ENCODE measurements at regions of chr12 and their contacts with region 1.

Region 1: GRCh38 chr12:6965026-6965661 is 5.3 kb downstream of the PHB2 start:
- DNase-seq: peak; percentile 92
- H3K4me3 Mint-ChIP-seq: peak overlapping the region; percentile 87
- H3K27ac Mint-ChIP-seq: peak overlapping the region; percentile 94
- H3K4me1 Mint-ChIP-seq: peaks cover 63% of the 10 kb centered on the region
- H3K27me3 Mint-ChIP-seq: no peaks in the 10 kb centered on the region
- CTCF ChIP-seq: peak; percentile 82

Region 2: DNA sequence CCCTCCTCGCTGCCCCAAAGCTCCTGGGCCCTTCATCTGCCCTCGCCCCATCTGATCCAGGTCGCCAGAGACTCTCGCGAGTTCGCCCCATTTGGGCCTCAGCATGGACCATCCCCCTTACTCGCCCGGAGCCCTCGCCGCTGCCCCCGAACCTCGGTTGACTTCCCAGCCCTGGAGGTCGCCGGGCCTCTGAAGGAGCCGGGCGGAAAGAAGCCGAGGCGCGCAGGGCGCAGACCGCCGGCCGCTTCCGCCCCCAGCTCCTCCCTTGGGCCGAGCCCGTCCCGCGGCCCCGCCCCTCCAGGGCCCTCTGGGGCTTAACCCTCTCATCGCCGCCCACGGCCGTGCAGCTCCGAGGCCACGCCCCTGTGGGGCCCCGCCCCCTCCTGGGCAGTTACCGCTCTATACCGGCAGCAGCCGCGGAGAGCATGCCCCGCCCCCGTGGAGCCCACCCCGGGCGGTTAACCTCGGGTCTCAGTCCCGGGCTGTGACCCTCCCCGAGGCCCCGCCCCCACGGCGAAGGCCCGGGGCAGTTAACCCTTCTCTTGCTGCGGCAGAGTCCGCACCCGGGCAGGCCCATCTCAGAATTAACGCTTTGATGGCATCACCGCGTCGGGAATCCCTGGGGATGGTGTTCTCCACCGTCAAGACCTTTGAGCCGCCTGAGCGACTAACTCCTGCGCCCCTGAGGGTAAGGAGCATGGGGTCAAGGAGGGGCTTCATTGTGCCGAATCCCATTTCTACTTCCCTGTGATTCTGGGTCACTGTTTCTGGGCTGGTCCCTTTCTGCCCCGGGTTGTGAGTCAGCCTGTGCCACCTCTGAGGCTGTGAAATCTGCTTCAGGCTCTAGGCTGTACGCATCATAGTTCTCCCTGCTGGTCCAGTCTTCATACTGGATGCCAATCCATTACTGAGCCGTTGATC is 91.8 kb before region 1 on chr12 and contains the start of gene SPSB2:
- CTCF ChIA-PET with region 1: interaction called, 7 read pairs
- POLR2A ChIA-PET with region 1: interaction called, 12 read pairs
- intact Hi-C with region 1: no loop called
- DNase-seq: peak; percentile 93
- H3K4me3 Mint-ChIP-seq: peak within 1 kb of the TSS; percentile 91
- H3K27ac Mint-ChIP-seq: peak within 1 kb of the TSS; percentile 77
- H3K4me1 Mint-ChIP-seq: peaks cover 24% of the 10 kb centered on the region
- H3K27me3 Mint-ChIP-seq: no peaks in the 10 kb centered on the region
- CTCF ChIP-seq: no peak
- total RNA-seq, gene SPSB2: 9.2 and 10.8 TPM in 2 replicates

Region 3: DNA sequence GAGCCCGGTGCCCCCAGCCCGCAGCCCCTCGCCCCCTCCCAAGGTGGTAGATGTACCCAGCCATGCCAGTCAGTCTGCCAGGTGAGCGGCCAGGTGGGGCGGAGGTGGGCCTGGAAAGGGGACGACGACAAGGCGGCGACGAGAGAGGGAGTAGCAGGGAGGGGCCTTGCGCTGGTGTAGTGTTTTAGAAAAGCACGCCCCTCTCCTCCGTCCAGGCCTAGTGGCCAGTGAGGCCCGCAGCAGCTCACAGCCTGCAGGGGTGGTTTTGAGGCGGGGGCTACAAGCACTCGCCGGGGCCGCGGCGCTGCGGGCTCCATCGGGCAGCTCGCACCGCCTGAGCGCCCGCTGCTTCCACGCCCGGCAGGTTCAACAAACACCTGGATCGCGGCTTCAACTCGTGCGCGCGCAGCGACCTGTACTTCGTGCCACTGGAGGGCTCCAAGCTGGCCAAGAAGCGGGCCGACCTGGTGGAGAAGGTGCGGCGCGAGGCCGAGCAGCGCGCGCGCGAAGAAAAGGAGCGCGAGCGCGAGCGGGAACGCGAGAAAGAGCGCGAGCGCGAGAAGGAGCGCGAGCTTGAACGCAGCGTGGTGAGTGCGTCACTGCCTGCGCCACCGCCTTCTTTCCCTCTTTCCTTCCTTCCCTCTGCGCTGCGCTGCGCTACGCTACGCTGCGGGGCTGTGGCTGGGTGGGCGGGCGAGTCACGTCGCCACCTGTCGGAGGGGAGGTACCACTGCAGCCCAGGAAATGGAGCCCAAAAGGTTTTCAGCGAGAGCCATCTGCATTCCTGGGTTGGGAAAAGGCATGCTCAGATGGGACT is 27.5 kb before region 1 on chr12:
- CTCF ChIA-PET with region 1: interaction called, 18 read pairs
- POLR2A ChIA-PET with region 1: interaction called, 495 read pairs
- intact Hi-C with region 1: no loop called
- DNase-seq: peak; percentile 94
- H3K4me3 Mint-ChIP-seq: peak overlapping the region; percentile 71
- H3K27ac Mint-ChIP-seq: peak overlapping the region; percentile 52
- H3K4me1 Mint-ChIP-seq: peaks cover 31% of the 10 kb centered on the region
- H3K27me3 Mint-ChIP-seq: no peaks in the 10 kb centered on the region
- CTCF ChIP-seq: peak; percentile 88

Region 4: DNA sequence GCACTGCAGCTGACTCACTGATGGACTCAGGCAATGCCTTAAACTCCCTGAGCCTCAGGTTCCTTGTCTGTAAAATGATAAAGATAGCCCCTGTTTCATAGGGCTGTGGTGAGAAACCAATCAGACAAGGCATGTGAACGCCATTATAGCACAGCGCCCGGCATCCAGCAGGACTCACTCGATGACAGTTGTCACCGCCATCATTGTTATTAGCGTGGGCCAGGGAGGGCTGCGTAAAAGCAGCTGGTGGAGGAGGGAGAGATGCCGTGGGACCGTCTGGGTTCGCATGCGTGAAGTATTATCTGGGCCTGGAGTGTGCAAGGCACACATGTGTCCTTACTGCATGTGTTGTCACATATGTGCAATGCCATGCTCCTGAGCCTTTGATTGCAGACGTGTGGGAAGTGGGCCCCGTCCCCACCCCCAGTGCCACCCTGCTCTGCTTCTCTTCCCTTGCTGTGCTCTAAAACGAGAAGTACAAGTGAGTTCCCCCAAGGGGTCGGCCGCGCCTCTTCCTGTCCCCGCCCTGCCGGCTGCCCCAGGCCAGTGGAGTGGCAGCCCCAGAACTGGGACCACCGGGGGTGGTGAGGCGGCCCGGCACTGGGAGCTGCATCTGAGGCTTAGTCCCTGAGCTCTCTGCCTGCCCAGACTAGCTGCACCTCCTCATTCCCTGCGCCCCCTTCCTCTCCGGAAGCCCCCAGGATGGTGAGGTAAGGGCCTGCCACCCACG is 14.2 kb before region 1 on chr12 and contains the start of gene PTPN6:
- CTCF ChIA-PET with region 1: interaction called, 160 read pairs
- POLR2A ChIA-PET with region 1: interaction called, 495 read pairs
- intact Hi-C with region 1: no loop called
- DNase-seq: no peak
- H3K4me3 Mint-ChIP-seq: no peak within 1 kb of the TSS
- H3K27ac Mint-ChIP-seq: no peak within 1 kb of the TSS
- H3K4me1 Mint-ChIP-seq: peaks cover 23% of the 10 kb centered on the region
- H3K27me3 Mint-ChIP-seq: no peaks in the 10 kb centered on the region
- CTCF ChIP-seq: no peak
- total RNA-seq, gene PTPN6: 10.3 and 13.2 TPM in 2 replicates

Region 5: GRCh38 chr12:7018350-7019042 is 53.4 kb after region 1 on chr12 and contains the start of gene LPCAT3:
- CTCF ChIA-PET with region 1: interaction called, 8 read pairs
- POLR2A ChIA-PET with region 1: interaction called, 45 read pairs
- intact Hi-C with region 1: loop called (anchors 2 kb)
- DNase-seq: peak; percentile 96
- H3K4me3 Mint-ChIP-seq: peak within 1 kb of the TSS; percentile 80
- H3K27ac Mint-ChIP-seq: peak within 1 kb of the TSS; percentile 29
- H3K4me1 Mint-ChIP-seq: peaks cover 32% of the 10 kb centered on the region
- H3K27me3 Mint-ChIP-seq: no peaks in the 10 kb centered on the region
- CTCF ChIP-seq: peak; percentile 77
- total RNA-seq, gene LPCAT3: 14.4 and 15.4 TPM in 2 replicates

Region 6: DNA sequence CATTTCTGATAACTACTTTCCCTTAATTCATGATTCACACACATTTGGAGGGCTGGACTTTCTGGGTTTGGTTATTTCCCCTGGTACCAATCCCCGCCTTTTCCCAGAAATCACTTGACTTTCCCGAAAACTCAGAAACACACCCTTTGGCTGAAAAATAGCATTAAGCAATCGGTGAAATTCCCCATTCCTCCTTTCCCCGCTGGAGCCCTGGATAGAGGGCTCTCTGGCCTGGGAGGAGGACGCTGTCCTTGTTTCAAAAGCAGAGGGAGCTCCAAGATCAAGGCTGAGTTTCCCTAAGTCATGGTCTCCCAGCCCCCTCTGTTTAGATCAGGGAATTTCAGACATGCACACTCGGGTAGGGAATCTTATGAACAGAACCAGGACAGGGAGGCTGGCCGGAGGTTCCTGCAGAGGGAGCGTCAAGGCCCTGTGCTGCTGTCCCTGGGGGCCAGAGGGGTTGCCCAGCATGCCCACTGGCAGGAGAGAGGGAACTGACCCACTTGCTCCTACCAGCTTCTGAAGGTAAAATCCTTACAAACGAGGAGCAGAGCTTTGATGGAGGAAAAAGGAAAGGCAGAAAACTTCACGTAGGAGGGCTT is 95.3 kb after region 1 on chr12 and contains the start of gene C1S:
- CTCF ChIA-PET with region 1: interaction called, 5 read pairs
- POLR2A ChIA-PET with region 1: interaction called, 19 read pairs
- intact Hi-C with region 1: no loop called
- DNase-seq: peak; percentile 98
- H3K4me3 Mint-ChIP-seq: peak within 1 kb of the TSS; percentile 63
- H3K27ac Mint-ChIP-seq: peak within 1 kb of the TSS; percentile 87
- H3K4me1 Mint-ChIP-seq: peaks cover 20% of the 10 kb centered on the region
- H3K27me3 Mint-ChIP-seq: peaks cover under 1% of the 10 kb centered on the region
- CTCF ChIP-seq: peak; percentile 70
- total RNA-seq, gene C1S: 6.0 and 11.5 TPM in 2 replicates